Colonic mucosa (tissue), 4 donors: ENCODE measurements at regions of chr7 and their contacts with region 1.

Region 1: GRCh38 chr7:73342645-73343044 is 14.7 kb downstream of the FKBP6 start:
- DNase-seq: no peak
- H3K4me3 ChIP-seq: no peak overlapping the region
- H3K27ac ChIP-seq: no peak overlapping the region
- H3K4me1 ChIP-seq: no peaks in the 10 kb centered on the region
- H3K27me3 ChIP-seq: no peaks in the 10 kb centered on the region
- CTCF ChIP-seq: no peak

Region 2: DNA sequence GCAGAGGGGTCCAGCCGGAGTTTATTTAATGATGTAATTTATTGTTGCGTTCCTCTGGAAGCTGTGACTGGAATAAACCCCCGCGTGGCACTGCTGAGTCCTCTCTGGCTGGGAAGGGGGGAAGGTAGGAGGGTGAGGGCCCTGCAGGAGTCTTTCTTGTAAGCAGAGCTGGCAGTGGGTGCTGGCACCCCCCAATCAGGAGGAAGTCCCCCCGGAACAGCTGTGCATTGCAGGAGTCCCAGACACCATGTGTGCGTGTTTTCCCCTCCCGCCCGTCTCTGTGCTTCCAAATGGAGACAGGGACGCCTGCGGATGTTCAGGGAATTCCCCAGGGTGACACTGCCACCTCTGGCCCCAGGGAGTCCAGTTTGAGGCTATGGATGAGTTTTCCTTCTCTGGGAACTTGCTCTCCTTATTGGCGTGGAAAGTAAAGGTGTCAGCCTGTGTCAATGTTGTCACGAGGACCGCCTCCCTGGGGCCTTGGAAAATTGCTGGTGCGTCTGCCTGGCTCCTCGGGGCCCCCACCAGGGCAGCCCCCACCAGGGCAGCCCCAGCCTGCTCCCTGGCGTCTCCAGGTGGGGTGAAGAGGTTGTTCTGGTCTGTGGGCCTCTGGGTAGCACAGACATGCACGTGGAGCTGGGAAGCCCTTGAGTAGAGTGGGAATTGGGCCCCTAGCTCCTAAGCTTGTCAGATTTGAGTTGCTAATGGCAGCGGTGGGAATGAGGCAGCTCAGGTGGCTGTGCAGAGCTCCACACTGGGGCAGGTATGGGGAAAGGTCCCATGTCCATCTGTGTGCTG is 93.6 kb after region 1 on chr7:
- intact Hi-C with region 1: loop called (anchors 5 kb)
- DNase-seq: no peak
- H3K4me3 ChIP-seq: no peak overlapping the region
- H3K27ac ChIP-seq: no peak overlapping the region
- H3K4me1 ChIP-seq: no peaks in the 10 kb centered on the region
- H3K27me3 ChIP-seq: no peaks in the 10 kb centered on the region
- CTCF ChIP-seq: no peak